ENCODE measurements at regions of chr4 and their contacts with region 1.

Region 1: GRCh38 chr4:157035471-157035870 is 40.5 kb upstream of the GLRB start:
- DNase-seq: no peak
- H3K4me3 ChIP-seq: no peak overlapping the region
- H3K27ac ChIP-seq: no peak overlapping the region
- H3K4me1 ChIP-seq: no peaks in the 10 kb centered on the region
- H3K27me3 ChIP-seq: no peaks in the 10 kb centered on the region
- CTCF ChIP-seq: no peak

Region 2: DNA sequence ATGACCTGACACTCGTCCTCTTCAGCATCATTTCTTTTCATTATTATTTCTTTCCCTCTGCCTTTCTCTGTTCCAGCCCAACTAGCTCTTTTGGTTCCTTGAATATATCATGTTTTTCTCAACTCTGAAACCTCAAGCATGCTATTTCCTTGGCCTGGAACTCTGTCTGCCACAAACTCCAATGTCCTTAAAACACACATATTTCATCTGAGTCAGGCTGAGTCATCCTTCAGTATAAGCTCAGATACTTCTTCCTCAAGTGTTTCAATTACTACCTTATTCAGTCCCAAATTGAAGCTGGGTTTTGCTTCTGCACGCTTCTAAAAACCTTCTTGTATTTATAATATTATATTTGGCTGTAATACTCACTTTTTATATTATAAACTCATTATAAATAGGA is 488.0 kb before region 1 on chr4:
- CTCF ChIA-PET with region 1: interaction called, 12 read pairs
- POLR2A ChIA-PET with region 1: no interaction called
- intact Hi-C with region 1: no loop called
- DNase-seq: no peak
- H3K4me3 ChIP-seq: no peak overlapping the region
- H3K27ac ChIP-seq: no peak overlapping the region
- H3K4me1 ChIP-seq: 0 out of 2 replicates have a peak, but pooled peaks cover 9% of the 10 kb centered on the region
- H3K27me3 ChIP-seq: no peaks in the 10 kb centered on the region
- CTCF ChIP-seq: no peak